ENCODE measurements at regions of chr21 and their contacts with region 1.

Region 1: DNA sequence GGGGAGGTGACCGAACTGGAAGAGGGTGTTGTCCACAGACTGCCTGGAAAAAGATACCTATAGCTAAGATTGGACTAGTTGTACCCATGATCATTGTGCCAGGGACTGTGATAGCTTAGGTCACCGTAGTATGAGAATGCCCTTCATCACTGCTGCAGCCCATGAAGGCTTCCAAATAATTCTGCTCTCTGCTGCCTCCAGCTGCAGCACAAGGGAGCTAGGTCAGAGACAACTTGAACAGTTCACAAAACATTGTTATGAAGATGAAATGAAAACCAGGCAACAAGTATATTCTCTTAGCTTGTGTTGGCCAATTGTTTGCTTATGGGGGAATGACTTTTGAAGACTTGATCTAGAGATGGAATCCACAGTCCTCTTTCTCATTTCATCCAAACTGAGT is 246.7 kb downstream of the MRPL39 start:
- DNase-seq: no peak
- ATAC-seq: peak; percentile 85
- H3K4me3 Mint-ChIP-seq: no peak overlapping the region
- H3K27ac Mint-ChIP-seq: no peak overlapping the region
- H3K4me1 Mint-ChIP-seq: peaks cover 8% of the 10 kb centered on the region
- H3K27me3 Mint-ChIP-seq: no peaks in the 10 kb centered on the region
- CTCF ChIP-seq: no peak; the same call in 1 of the 2 replicates

Region 2: DNA sequence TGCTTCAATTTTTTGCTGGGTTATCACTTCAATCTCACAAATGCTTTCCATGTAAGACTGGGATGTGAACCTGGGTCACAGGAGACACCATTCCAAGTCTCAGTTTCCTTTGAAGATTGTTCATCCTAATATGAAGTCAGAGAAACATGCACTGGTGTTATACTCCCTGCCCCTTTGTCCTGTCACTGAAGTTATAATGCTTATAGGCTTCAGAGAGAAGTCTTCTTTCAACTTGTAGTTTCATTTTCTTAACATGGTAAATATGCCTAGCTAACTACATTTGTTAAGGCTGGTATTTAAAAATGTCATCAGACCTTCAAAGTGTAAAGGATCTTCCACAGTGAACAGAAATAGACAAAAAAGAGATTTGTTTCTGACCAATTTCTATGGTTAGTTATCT is 949.2 kb before region 1 on chr21:
- CTCF ChIA-PET with region 1: no interaction called
- POLR2A ChIA-PET with region 1: no interaction called
- DNase-seq: no peak
- ATAC-seq: no peak
- H3K4me3 Mint-ChIP-seq: no peak overlapping the region
- H3K27ac Mint-ChIP-seq: no peak overlapping the region
- H3K4me1 Mint-ChIP-seq: no peaks in the 10 kb centered on the region
- H3K27me3 Mint-ChIP-seq: peaks cover 9% of the 10 kb centered on the region
- CTCF ChIP-seq: no peak

Region 3: DNA sequence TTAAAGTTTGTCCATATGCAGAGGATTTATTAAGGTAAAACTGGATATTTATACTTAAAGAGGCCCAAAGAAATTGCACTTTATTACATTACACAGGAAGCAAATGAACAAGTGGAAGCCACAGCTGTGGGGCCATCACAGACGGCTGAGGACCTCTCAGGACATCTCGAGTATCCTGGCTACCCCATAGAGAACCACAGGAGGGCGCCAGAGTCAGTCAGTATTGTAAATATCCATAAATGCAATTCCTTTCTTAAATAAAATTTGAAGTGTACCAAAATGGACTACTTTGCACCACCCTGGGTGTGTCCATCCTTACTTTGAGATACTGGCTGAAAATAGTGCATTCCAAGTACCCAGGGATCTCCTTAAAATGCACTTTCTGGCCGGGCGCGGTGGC is 10.5 kb before region 1 on chr21:
- CTCF ChIA-PET with region 1: interaction called, 19 read pairs
- POLR2A ChIA-PET with region 1: no interaction called
- DNase-seq: peak; percentile 71
- ATAC-seq: peak; percentile 78
- H3K4me3 Mint-ChIP-seq: no peak overlapping the region
- H3K27ac Mint-ChIP-seq: no peak overlapping the region
- H3K4me1 Mint-ChIP-seq: no peaks in the 10 kb centered on the region
- H3K27me3 Mint-ChIP-seq: peaks cover 2% of the 10 kb centered on the region; the same call in 1 of the 2 replicates
- CTCF ChIP-seq: peak; percentile 70

Measured in WTC11 (cell line).